A549 (cell line): ENCODE measurements at regions of chr14 and their contacts with region 1.

Region 1: GRCh38 chr14:103391048-103391447 is 5.8 kb downstream of the MARK3 start:
- DNase-seq: peak; percentile 41 to 74
- ATAC-seq: peak; percentile 70 to 78
- H3K4me3 ChIP-seq: no peak overlapping the region
- H3K27ac ChIP-seq: no peak overlapping the region
- H3K4me1 ChIP-seq: peaks cover 50% of the 10 kb centered on the region
- CTCF ChIP-seq: peak; percentile 98
- EP300 ChIP-seq: no peak
- POLR2A ChIP-seq: no peak
- RAD21 ChIP-seq: peak; percentile 59 to 70

Region 2: DNA sequence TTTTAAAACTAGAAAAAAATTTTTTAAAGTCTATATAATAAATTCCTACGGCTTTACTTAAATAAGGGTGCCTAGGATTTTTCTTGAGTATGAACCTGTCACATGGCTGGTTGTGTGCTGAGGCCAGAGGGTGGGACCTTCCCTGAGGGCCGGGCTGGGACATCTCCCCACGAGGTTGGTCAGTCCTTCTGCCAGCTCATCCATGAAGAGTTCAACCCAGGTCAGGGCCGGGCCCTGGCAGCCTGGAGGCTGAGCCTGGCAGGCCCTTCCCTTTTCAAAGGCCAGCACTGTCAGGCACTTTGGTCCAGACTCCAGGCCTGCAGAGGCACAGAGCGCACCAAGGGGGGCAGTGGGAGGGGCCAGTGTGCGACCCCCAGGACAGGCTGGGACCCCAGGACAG is 236.0 kb before region 1 on chr14:
- CTCF ChIA-PET with region 1: no interaction called
- POLR2A ChIA-PET with region 1: no interaction called
- DNase-seq: peak; percentile 88 to 89
- ATAC-seq: peak; percentile 96 to 98
- H3K4me3 ChIP-seq: no peak overlapping the region
- H3K27ac ChIP-seq: peak overlapping the region; percentile 79 to 93
- H3K4me1 ChIP-seq: peaks cover 25% of the 10 kb centered on the region
- CTCF ChIP-seq: no peak
- EP300 ChIP-seq: no peak
- POLR2A ChIP-seq: no peak
- RAD21 ChIP-seq: no peak

Region 3: GRCh38 chr14:103333754-103334643 is 57.0 kb before region 1 on chr14 and contains the start of gene EIF5:
- CTCF ChIA-PET with region 1: interaction called, 10 read pairs
- POLR2A ChIA-PET with region 1: interaction called, 9 read pairs
- DNase-seq: peak; percentile 86 to 99
- ATAC-seq: peak; percentile 94
- H3K4me3 ChIP-seq: peak within 1 kb of the TSS; percentile 93
- H3K27ac ChIP-seq: peak within 1 kb of the TSS; percentile 98 to 99
- H3K4me1 ChIP-seq: peaks cover 48% of the 10 kb centered on the region
- CTCF ChIP-seq: no peak
- EP300 ChIP-seq: no peak
- POLR2A ChIP-seq: peak; percentile 92
- RAD21 ChIP-seq: 0 out of 5 replicates have a peak, but pooled peaks of 1 of the 2 experiments have one; percentile 11
- polyA plus RNA-seq, gene EIF5: 509 and 591 TPM in 2 replicates

Region 4: DNA sequence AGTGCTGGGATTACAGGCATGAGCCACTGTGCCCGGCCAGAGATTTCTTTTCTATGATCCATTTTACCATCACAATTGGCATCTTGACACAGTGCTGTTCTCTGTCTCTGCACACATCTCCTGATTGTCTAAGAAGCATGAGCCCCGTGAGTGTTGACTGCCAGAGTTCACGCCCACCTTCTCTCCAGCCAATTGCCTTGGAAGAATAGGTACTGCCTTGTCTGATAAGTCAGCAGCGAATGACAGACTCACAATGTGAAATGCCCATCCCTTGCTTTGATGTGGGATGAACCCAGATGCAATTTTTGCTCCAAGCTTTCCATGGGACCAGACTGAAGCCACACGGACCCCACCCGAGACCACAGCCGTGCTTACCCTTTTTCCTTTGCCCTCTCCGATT is 37.7 kb before region 1 on chr14:
- CTCF ChIA-PET with region 1: interaction called, 20 read pairs
- POLR2A ChIA-PET with region 1: no interaction called
- DNase-seq: no peak
- ATAC-seq: no peak
- H3K4me3 ChIP-seq: no peak overlapping the region
- H3K27ac ChIP-seq: no peak overlapping the region
- H3K4me1 ChIP-seq: peaks cover 9% of the 10 kb centered on the region; the same call in 2 of the 3 replicates
- CTCF ChIP-seq: no peak
- EP300 ChIP-seq: no peak
- POLR2A ChIP-seq: no peak
- RAD21 ChIP-seq: no peak

Region 5: DNA sequence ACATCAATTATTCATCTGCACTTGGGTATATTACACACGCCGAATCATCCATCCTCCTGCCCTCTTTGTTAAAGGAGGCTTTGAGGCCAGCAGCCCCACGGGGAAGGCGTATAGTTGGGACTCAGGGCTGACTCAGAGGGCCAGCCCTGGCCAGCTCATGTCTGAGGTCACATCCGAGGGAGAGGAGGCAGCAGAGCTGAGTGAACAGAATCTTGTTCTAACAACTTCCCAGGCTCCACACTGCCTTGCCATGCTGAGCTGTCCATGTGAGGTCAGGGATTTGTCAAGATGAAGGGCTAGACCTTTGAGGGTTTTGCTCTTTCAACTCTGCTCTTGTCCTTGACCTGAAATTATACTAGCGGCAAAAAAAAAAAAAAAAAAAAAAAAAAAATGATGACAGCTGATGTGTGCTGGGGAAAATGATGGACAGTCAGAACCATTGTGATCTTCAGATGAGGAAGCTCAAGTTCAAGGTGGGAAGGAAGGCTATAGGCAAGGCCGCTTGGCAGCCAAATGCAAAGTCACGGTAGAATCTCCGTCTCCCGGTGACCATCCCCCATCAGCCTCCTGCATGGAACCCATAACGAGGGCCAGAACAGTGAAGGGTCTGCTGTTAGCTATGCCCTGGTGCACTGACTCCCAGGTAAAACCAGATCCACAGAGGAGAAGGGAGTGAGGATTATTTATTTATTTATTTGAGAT is 18.3 kb before region 1 on chr14:
- CTCF ChIA-PET with region 1: interaction called, 94 read pairs
- POLR2A ChIA-PET with region 1: no interaction called
- DNase-seq: peak; percentile 77 to 78
- ATAC-seq: peak; percentile 99
- H3K4me3 ChIP-seq: no peak overlapping the region
- H3K27ac ChIP-seq: peak overlapping the region; percentile 62 to 71; a peak in 5 of 6 replicates
- H3K4me1 ChIP-seq: peaks cover 21% of the 10 kb centered on the region
- CTCF ChIP-seq: no peak
- EP300 ChIP-seq: no peak
- POLR2A ChIP-seq: no peak
- RAD21 ChIP-seq: no peak

Region 6: DNA sequence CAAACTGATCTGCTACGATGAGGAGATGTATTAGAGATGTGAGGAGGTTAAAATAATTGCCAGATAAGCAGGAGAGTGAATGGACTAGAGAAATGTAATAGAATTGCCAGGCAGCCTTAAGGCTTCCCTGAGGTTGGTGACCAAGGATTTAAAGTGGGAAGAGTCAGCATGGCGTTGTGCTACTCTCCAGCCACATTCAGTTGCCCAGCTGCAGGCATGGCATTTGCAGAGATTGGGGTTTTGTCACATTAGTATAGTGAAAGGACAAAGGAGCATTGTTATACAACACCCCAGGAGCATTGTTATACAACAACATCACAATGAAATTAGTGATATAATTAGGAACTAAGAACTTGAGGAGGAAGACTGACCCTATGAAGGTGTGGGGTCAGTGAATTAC is 25.9 kb after region 1 on chr14:
- CTCF ChIA-PET with region 1: interaction called, 11 read pairs
- POLR2A ChIA-PET with region 1: no interaction called
- DNase-seq: no peak
- ATAC-seq: no peak
- H3K4me3 ChIP-seq: no peak overlapping the region
- H3K27ac ChIP-seq: no peak overlapping the region
- H3K4me1 ChIP-seq: peaks cover 18% of the 10 kb centered on the region; the same call in 2 of the 3 replicates
- CTCF ChIP-seq: no peak
- EP300 ChIP-seq: no peak
- POLR2A ChIP-seq: no peak
- RAD21 ChIP-seq: no peak

Region 7: DNA sequence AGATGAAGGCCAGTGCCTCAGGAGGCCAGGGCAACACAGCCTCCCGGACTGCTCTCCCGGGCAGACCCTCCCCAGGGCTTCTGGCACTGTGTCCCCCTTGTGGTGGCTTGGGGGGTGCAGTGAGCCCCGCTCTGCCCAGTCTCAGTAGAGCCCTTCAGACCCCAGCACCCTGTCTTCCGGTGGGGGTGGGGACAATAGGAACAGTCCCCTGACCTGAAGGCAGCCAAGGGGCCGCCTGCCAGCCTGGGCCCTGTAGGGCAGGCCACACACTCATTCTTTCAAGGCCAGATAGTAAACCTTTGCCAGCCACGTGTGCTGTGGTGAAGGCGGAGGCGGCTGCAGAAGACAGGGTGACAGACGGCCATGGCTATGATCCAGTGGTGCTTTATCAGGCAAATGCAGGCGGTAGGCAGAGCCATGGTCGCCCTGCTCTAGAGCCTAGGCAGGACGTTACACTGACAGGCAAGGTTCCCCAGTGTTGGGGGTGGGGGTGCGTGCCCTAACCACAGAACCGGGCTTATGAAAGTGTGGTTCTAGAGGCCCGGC is 339.5 kb after region 1 on chr14:
- CTCF ChIA-PET with region 1: no interaction called
- POLR2A ChIA-PET with region 1: no interaction called
- DNase-seq: no peak
- ATAC-seq: peak in 1 of 2 experiments; percentile 28; a peak in 2 of 6 replicates
- H3K4me3 ChIP-seq: no peak overlapping the region
- H3K27ac ChIP-seq: no peak overlapping the region
- H3K4me1 ChIP-seq: no peaks in the 10 kb centered on the region
- CTCF ChIP-seq: no peak
- EP300 ChIP-seq: no peak
- POLR2A ChIP-seq: no peak
- RAD21 ChIP-seq: no peak